ENCODE measurements at regions of chr12 and their contacts with region 1.

Region 1: DNA sequence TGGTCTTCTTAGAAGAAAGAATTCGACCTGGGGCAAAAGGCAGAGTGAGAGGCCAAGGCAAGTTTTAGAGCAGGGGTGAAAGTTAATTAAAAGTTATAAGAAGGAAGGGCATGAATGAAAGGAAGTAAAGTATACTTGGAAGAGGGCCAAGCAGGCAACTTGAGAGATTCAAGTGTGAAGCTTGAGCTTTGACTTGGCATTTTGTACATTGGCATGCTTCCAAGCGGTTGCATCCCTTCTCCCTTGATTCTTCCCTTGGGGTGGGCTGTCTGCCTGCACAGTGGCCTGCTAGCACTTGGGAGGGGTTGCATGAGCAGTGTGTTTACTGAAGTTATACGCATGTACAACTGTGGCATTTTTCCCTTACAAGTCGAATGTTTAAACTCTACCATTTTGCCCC is 74.8 kb upstream of the MGAT4C start:
- DNase-seq: no peak
- H3K4me3 ChIP-seq: no peak overlapping the region
- H3K27ac ChIP-seq: no peak overlapping the region
- H3K4me1 ChIP-seq: no peaks in the 10 kb centered on the region
- H3K27me3 ChIP-seq: no peaks in the 10 kb centered on the region
- CTCF ChIP-seq: no peak
- POLR2A ChIP-seq: no peak

Region 2: DNA sequence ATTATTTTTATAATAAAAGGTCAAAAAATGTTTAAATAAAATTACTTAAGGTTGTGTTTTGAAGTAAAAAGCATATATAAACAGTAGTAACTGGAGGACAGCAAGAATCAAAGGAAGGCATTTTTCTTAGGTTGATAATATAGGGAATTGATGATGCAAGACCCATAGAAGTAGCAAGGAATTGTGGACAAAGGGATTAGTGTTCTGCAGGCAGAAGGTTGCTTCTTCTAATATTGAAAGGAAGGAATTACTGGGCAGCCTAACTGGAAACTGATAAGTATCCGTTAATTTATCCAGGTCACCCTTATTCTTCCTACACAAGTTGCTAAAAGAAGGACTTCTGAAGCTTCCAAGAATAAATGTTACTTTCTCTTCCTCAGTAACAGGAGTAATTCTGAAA is 1105.5 kb before region 1 on chr12:
- intact Hi-C with region 1: no loop called
- DNase-seq: no peak
- H3K4me3 ChIP-seq: no peak overlapping the region
- H3K27ac ChIP-seq: no peak overlapping the region
- H3K4me1 ChIP-seq: no peaks in the 10 kb centered on the region
- H3K27me3 ChIP-seq: no peaks in the 10 kb centered on the region
- CTCF ChIP-seq: no peak
- POLR2A ChIP-seq: no peak

Region 3: GRCh38 chr12:86158956-86159355 is 172.1 kb before region 1 on chr12:
- intact Hi-C with region 1: loop called (anchors 10 kb)
- DNase-seq: no peak
- H3K4me3 ChIP-seq: no peak overlapping the region
- H3K27ac ChIP-seq: no peak overlapping the region
- H3K4me1 ChIP-seq: no peaks in the 10 kb centered on the region
- H3K27me3 ChIP-seq: no peaks in the 10 kb centered on the region
- CTCF ChIP-seq: no peak
- POLR2A ChIP-seq: no peak